GM10248 (cell line): ENCODE measurements at regions of chr1 and their contacts with region 1.

Region 1: DNA sequence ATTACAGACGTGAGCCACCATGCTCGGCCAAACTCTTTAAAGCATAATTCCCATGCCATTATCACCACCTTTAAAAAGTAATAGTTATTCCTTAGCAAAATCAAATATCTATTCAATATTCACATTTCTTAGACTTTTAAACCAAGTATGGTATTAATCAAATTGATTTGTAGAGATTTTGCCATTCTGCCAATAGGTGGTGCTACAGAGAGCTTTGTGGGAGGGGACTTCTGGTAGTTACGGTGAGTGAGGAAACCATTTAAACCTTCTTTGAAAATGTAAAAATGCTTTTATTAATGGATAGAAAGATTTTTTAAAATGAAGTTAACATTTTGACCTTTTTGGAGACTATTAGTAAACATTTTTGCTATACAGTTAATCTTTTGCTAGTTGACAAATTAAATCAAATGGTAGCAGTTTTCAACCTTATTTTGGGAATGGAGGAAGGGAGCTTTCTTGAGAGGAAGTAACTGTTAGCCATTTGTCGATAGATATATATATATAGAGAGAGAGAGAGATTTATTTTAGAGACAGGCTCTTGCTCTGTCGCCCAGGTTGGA is 19.3 kb downstream of the IARS2 start:
- DNase-seq: peak; percentile 36
- CTCF ChIP-seq: peak; percentile 43

Region 2: DNA sequence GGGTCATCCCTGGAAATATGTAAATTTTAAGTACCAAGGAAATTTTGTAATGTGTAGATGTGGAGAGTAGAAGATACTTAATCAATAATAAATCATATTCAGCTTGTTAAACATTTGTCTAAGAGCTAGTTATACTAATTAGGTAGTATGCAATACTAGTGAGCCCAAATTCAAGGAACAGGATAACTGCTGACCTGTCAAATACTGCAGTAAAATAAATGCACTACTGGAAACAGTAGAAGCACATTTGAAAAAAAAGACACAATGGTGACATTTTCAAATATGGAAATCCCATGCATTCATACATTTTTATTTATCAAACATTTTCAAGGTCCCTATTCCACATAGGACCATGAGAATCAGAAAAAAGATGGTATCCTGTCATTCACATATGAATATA is 94.1 kb before region 1 on chr1:
- CTCF ChIA-PET with region 1: no interaction called
- POLR2A ChIA-PET with region 1: no interaction called
- DNase-seq: no peak
- CTCF ChIP-seq: no peak

Region 3: GRCh38 chr1:220123889-220124288 is 10.7 kb after region 1 on chr1:
- CTCF ChIA-PET with region 1: interaction called, 15 read pairs
- POLR2A ChIA-PET with region 1: no interaction called
- DNase-seq: no peak
- CTCF ChIP-seq: peak; percentile 20